Dorsolateral prefrontal cortex (tissue), 120 donors: ENCODE measurements at regions of chr2 and their contacts with region 1.

Region 1: DNA sequence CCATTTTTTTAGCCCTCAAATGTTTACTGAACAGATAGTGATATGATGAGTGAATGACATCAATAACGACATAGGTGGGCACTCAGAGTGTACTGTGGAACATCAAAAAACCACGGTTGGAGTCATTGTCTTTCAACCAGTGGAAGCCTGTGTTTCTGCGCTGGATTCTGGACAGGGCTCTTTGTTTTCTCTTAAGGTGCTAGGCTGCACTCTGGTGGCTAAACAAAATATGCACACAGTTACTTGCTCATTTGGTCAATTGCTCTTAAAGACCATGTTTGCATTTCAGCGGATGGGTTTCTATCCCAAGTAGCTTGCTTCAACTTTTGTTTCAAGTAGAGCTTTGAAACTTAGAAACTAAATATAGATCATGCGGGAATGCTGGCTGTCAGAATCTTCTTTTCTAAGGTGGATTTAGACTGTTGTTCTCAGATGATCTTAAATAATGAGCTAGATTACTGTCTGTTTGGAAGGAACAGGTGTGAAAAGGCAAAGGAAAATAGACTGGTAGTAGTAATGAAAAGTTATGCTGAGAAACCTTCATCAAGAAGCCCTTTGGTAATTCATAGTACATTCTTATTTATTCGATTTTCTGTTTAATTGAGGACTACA is 48.5 kb upstream of the LYPD6B start:
- DNase-seq: peak in 3 of 10 donors; percentile 58 to 83 (median 78)
- H3K4me3 ChIP-seq: no peak overlapping the region
- H3K27ac ChIP-seq: peak overlapping the region in 8 of 59 donors; percentile 3 to 51 (median 26)
- H3K27me3 ChIP-seq: no peaks in the 10 kb centered on the region
- CTCF ChIP-seq: peak; percentile 50 to 94 (median 80)

Region 2: DNA sequence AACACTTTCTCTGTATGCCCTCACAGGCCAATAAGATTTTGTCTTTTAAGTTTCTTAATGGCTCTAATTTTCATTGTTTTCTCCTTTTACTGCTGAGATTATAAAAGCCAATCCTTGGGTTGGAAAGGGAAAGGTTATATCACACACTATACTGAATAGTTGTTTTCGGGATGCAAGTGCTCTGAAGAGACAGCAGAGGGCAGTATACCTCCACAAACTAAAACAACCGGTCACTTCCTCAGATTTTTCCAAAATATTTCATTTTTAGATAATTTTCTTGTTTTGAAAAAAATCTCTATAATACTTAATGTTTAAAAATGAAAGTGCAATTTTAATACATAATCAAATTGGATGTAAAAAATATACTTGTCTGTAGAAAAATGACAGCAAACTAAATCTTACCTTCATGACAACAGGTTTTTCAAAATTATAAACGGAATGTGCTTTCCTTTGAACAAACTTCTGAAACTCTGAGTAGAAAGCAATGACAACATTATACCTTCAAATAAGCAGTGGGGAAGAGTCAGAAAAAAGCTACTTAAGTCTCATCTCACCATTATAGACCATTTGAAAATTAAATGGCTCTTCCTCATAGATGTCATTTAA is 1052.1 kb before region 1 on chr2:
- intact Hi-C with region 1: loop called (anchors 5 to 10 kb)
- DNase-seq: no peak
- H3K4me3 ChIP-seq: no peak overlapping the region
- H3K27ac ChIP-seq: no peak overlapping the region
- H3K27me3 ChIP-seq: no peaks in the 10 kb centered on the region
- CTCF ChIP-seq: peak; percentile 75 to 99 (median 90)

Region 3: DNA sequence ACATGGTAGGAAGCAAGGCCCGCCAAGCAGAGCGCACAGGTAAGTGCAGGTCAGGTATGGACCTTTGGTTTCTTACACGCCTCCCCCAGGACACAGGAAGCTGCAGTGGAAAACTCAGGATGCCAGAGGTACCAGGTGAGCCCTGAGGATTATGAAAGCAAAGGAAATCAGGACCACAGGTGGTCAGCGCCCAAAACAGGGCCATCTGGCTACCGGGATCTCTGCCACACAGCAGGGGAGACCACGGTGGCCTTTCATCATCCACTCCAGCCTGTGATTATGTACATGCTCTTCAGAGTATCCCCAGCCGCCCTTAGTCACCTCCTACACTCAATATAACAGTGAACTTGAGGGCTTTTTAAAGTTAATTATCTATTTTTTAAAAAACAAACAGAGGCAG is 471.0 kb before region 1 on chr2:
- intact Hi-C with region 1: loop called in 1 of 2 experiments (anchors 10 kb)
- DNase-seq: peak in 1 of 10 donors; percentile 78
- H3K4me3 ChIP-seq: no peak overlapping the region
- H3K27ac ChIP-seq: peak overlapping the region in 1 of 59 donors; percentile 51
- H3K27me3 ChIP-seq: no peaks in the 10 kb centered on the region
- CTCF ChIP-seq: no peak

Region 4: DNA sequence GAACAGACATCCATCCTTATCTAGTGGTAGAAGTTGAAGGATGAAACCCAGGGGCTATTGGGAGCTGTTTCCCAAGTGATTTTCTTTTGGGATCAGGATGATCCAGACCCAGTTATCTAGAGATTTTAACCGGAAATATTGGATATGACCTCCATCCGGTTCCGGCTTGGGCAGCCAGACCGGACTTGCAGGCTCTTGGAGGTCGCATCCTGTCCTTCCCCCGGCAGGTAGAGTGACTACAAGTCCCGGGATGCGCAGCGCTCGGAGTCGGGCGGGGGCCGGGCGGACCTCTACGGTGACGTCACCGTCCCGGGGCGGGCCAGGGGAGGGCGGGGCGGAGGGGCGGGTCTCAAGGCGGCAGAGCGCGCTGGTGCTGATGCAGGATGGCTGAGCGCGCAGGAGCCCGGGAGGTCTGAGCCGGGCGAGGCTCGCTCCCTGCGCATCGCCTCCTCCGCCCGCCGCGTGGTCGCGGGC is 115.1 kb before region 1 on chr2 and contains the start of gene KIF5C:
- intact Hi-C with region 1: loop called in 1 of 2 experiments (anchors 5 kb)
- DNase-seq: peak; percentile 84 to 96 (median 92)
- H3K4me3 ChIP-seq: peak within 1 kb of the TSS; percentile 52 to 97 (median 88)
- H3K27ac ChIP-seq: peak within 1 kb of the TSS; percentile 20 to 94 (median 89)
- H3K27me3 ChIP-seq: no peaks in the 10 kb centered on the region
- CTCF ChIP-seq: peak in 4 of 56 donors; percentile 8 to 19 (median 12)
- total RNA-seq, gene KIF5C: 329 to 792 (median 457) TPM

Region 5: GRCh38 chr2:148926291-148926961 is 63.6 kb before region 1 on chr2:
- intact Hi-C with region 1: loop called in 1 of 2 experiments (anchors 5 kb)
- DNase-seq: peak; percentile 58 to 92 (median 72)
- H3K4me3 ChIP-seq: peak overlapping the region in 44 of 59 donors; percentile 1 to 52 (median 28)
- H3K27ac ChIP-seq: peak overlapping the region; percentile 7 to 98 (median 91)
- H3K27me3 ChIP-seq: no peaks in the 10 kb centered on the region
- CTCF ChIP-seq: peak; percentile 50 to 84 (median 71)